ENCODE measurements at regions of chr20 and their contacts with region 1.

Region 1: DNA sequence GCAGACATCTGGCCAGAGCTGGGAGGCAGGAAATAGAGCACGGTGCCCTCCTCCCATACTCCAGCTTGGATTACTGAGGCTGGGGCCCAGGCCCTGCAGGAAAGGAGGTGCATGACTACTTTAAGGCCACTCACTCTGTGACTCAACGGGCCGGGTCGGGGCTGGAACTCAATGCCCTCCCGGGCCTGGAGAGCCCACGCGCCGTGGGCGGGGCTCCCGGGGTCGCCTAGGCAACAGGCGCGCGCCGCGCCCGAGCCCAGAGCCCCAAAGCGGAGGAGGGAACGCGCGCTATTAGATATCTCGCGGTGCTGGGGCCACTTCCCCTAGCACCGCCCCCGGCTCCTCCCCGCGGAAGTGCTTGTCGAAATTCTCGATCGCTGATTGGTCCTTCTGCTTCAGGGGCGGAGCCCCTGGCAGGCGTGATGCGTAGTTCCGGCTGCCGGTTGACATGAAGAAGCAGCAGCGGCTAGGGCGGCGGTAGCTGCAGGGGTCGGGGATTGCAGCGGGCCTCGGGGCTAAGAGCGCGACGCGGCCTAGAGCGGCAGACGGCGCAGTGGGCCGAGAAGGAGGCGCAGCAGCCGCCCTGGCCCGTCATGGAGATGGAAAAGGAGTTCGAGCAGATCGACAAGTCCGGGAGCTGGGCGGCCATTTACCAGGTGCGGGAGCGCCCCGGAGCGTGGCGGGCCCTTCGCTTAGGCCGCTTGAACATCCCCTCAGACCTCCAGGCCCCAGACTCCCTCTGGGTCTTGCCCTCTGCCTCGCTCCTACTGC is at the start of gene PTPN1:
- DNase-seq: peak; percentile 97 to 100 (median 99)
- ATAC-seq: peak; percentile 98
- H3K4me3 ChIP-seq: peak within 1 kb of the TSS; percentile 88
- H3K4me3 Mint-ChIP-seq: peak within 1 kb of the TSS; percentile 93 to 100 (median 97)
- H3K27ac ChIP-seq: peak within 1 kb of the TSS; percentile 89
- H3K27ac Mint-ChIP-seq: peak within 1 kb of the TSS; percentile 93 to 98 (median 98)
- H3K4me1 ChIP-seq: peaks cover 32 to 38% of the 10 kb centered on the region in 2 donors
- H3K4me1 Mint-ChIP-seq: peaks cover 36 to 52% (median 46%) of the 10 kb centered on the region in 7 donors
- H3K27me3 ChIP-seq: no peaks in the 10 kb centered on the region
- H3K27me3 Mint-ChIP-seq: no peaks in the 10 kb centered on the region
- total RNA-seq, gene PTPN1: 53.9 to 80.5 (median 60.2) TPM

Region 2: DNA sequence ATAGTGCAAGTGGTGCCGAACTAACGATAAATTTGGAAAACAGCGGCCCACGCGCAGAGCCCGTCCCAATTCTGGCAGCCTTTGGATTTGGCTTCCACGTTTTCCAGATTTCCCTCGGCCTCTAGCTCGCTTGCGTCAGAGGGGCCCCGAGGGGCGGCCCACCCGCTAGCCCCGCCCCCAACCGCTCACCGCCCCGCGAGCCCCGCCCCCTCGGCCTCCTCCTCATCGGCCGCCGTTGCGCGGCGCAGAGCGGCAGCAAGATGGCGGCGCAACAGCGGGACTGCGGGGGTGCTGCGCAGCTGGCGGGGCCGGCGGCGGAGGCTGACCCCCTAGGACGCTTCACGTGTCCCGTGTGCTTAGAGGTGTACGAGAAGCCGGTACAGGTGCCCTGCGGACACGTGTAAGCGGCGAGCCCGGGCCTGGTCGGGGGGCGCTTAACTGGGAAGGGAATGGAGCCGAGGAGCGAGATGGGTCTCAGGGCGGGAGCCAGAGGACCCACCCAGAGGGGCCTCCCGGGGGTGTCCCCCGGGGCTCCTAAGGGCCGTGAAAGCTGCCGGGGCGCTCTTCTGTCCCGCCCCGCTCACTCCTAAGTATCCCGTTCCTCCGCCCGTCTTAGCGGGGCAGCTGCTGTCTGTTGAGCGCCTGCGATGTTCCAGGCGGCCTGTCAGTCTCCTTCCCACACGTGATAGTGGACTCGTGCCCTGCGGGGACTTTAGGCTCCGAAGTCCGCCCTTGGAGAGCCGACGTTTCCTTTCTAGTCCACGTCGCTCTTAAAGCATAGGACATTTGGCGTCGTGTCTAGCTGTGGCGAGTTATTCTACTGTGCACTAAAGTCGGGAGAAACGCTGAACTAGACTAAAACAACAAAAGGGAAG is 573.7 kb before region 1 on chr20 and contains the start of gene RNF114:
- CTCF ChIA-PET with region 1: no interaction called
- POLR2A ChIA-PET with region 1: no interaction called
- intact Hi-C with region 1: loop called (anchors 2 kb)
- DNase-seq: peak; percentile 79 to 92 (median 86)
- ATAC-seq: peak; percentile 99
- H3K4me3 ChIP-seq: peak within 1 kb of the TSS; percentile 90
- H3K4me3 Mint-ChIP-seq: peak within 1 kb of the TSS; percentile 95 to 100 (median 98)
- H3K27ac ChIP-seq: peak within 1 kb of the TSS; percentile 95
- H3K27ac Mint-ChIP-seq: peak within 1 kb of the TSS; percentile 83 to 98 (median 95)
- H3K4me1 ChIP-seq: peaks cover 20 to 27% of the 10 kb centered on the region in 2 donors
- H3K4me1 Mint-ChIP-seq: peaks cover 36 to 61% (median 53%) of the 10 kb centered on the region in 7 donors
- H3K27me3 ChIP-seq: no peaks in the 10 kb centered on the region
- H3K27me3 Mint-ChIP-seq: no peaks in the 10 kb centered on the region
- total RNA-seq, gene RNF114: 67.1 to 113 (median 101) TPM

Region 3: GRCh38 chr20:50189681-50190582 is 320.2 kb before region 1 on chr20:
- CTCF ChIA-PET with region 1: interaction called, 3 read pairs
- POLR2A ChIA-PET with region 1: interaction called, 6 read pairs
- intact Hi-C with region 1: loop called (anchors 1 to 2 kb)
- DNase-seq: peak; percentile 73 to 92 (median 85)
- ATAC-seq: peak; percentile 84
- H3K4me3 ChIP-seq: peak overlapping the region; percentile 55
- H3K4me3 Mint-ChIP-seq: peak overlapping the region; percentile 25 to 93 (median 62)
- H3K27ac ChIP-seq: peak overlapping the region; percentile 77
- H3K27ac Mint-ChIP-seq: peak overlapping the region in 7 of 9 donors; percentile 16 to 71 (median 64)
- H3K4me1 ChIP-seq: peaks cover 11 to 21% of the 10 kb centered on the region in 2 donors
- H3K4me1 Mint-ChIP-seq: peaks cover 23 to 31% (median 26%) of the 10 kb centered on the region in 7 donors
- H3K27me3 ChIP-seq: no peaks in the 10 kb centered on the region
- H3K27me3 Mint-ChIP-seq: peaks cover 10 to 12% (median 11%) of the 10 kb centered on the region in 5 donors

Region 4: DNA sequence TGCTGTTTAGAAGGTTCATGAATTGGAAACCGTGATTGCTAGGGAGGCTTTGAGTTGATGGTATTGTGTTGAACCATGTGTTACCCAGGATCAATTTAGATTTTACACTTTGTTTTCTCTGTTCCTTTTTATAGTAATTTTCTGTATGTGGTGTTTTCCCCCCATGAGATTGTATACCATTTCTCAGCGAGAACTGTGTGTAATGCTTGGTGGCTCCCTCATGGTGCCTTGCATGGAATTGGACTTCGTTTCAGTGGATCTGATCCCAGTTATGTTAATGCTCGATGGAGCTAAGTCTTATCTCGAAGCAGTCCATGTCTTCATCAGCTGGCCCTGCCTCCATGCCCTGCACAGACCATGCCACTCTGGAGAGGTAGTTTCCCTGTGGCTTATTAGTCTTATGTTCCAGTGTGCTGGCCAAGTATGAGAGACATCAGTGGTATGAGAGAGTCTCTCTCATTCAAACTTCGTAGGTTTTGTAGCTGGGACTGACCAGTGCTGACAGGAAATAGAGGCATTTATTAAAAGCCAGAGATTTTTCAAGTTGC is 18.8 kb after region 1 on chr20:
- CTCF ChIA-PET with region 1: interaction called, 3 read pairs
- POLR2A ChIA-PET with region 1: interaction called, 50 read pairs
- intact Hi-C with region 1: no loop called
- DNase-seq: no peak
- ATAC-seq: no peak
- H3K4me3 ChIP-seq: no peak overlapping the region
- H3K4me3 Mint-ChIP-seq: peak overlapping the region in 8 of 10 donors; percentile 0 to 61 (median 24)
- H3K27ac ChIP-seq: no peak overlapping the region
- H3K27ac Mint-ChIP-seq: peak overlapping the region in 2 of 9 donors; percentile 53 to 68
- H3K4me1 ChIP-seq: peaks cover 29 to 37% of the 10 kb centered on the region in 2 donors
- H3K4me1 Mint-ChIP-seq: peaks cover 29 to 49% (median 36%) of the 10 kb centered on the region in 7 donors
- H3K27me3 ChIP-seq: no peaks in the 10 kb centered on the region
- H3K27me3 Mint-ChIP-seq: no peaks in the 10 kb centered on the region

Region 5: GRCh38 chr20:50561379-50562078 is 51.4 kb after region 1 on chr20:
- CTCF ChIA-PET with region 1: interaction called, 4 read pairs
- POLR2A ChIA-PET with region 1: interaction called, 24 read pairs
- intact Hi-C with region 1: no loop called
- DNase-seq: peak in 1 of 9 donors; percentile 62
- ATAC-seq: no peak
- H3K4me3 ChIP-seq: no peak overlapping the region
- H3K4me3 Mint-ChIP-seq: peak overlapping the region in 2 of 10 donors; percentile 25 to 40
- H3K27ac ChIP-seq: no peak overlapping the region
- H3K27ac Mint-ChIP-seq: peak overlapping the region in 8 of 9 donors; percentile 6 to 86 (median 48)
- H3K4me1 ChIP-seq: peaks cover 0 to 3% of the 10 kb centered on the region in 2 donors
- H3K4me1 Mint-ChIP-seq: peaks cover 30 to 65% (median 48%) of the 10 kb centered on the region in 7 donors
- H3K27me3 ChIP-seq: no peaks in the 10 kb centered on the region
- H3K27me3 Mint-ChIP-seq: no peaks in the 10 kb centered on the region

Region 6: GRCh38 chr20:50731055-50731871 is 221.1 kb after region 1 on chr20 and contains the start of gene PARD6B:
- CTCF ChIA-PET with region 1: no interaction called
- POLR2A ChIA-PET with region 1: interaction called, 3 read pairs
- intact Hi-C with region 1: loop called (anchors 1 to 2 kb)
- DNase-seq: peak; percentile 94 to 100 (median 100)
- ATAC-seq: peak; percentile 97
- H3K4me3 ChIP-seq: peak within 1 kb of the TSS; percentile 80
- H3K4me3 Mint-ChIP-seq: peak within 1 kb of the TSS; percentile 79 to 94 (median 88)
- H3K27ac ChIP-seq: peak within 1 kb of the TSS; percentile 80
- H3K27ac Mint-ChIP-seq: peak within 1 kb of the TSS; percentile 75 to 95 (median 83)
- H3K4me1 ChIP-seq: peaks cover 9 to 14% of the 10 kb centered on the region in 2 donors
- H3K4me1 Mint-ChIP-seq: peaks cover 22 to 45% (median 34%) of the 10 kb centered on the region in 7 donors
- H3K27me3 ChIP-seq: no peaks in the 10 kb centered on the region
- H3K27me3 Mint-ChIP-seq: peaks cover 0 to 3% (median 0%) of the 10 kb centered on the region in 5 donors
- total RNA-seq, gene PARD6B: 5.2 to 10.8 (median 7.7) TPM

Measured in naive thymus-derived CD4-positive, alpha-beta T cell (primary cell).